Pancreas (tissue), 10 donors: ENCODE measurements at regions of chr13 and their contacts with region 1.

Region 1: DNA sequence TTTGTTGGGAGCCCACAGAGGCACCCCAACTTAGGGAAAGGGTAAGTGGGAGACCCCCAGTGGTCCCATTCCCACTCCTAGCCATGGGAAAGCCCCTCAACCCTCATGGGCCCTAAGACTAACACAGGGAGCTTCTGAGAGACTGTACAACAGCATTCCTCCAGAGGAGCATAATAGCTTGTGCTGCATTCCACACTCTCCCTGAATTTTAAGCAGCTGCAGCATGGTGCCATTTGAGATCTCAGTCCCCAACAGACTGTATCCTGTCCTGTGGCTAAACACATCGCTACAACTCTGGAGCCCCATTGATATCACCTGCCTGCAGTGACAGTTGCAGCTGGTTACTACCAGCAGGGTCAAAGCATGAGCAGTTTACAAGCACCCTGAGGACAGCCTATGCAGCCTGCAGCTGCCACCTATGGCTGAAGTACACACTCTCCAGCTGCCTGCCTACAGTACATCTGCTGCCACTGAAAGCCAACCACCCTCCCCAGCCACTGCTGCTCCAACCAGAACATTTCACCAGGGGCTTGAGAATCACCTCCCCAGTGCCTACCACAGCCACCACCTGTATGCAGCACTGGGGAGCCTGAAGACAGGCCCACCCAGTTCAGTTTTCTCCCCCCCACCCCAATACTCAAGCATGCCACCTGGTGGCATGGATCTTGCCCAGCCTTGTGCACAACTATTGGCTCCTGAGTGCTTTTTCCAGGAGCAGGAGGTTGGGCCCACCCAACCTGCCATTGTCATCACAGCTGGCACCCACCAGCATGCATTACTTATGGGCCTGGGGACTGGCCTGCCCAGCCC is 557.3 kb downstream of the GPC5 start:
- DNase-seq: peak in 2 of 6 donors; percentile 11 to 21
- ATAC-seq: no peak
- H3K4me3 ChIP-seq: no peak overlapping the region
- H3K27ac ChIP-seq: no peak overlapping the region
- H3K4me1 ChIP-seq: no peaks in the 10 kb centered on the region
- H3K27me3 ChIP-seq: no peaks in the 10 kb centered on the region
- CTCF ChIP-seq: no peak

Region 2: DNA sequence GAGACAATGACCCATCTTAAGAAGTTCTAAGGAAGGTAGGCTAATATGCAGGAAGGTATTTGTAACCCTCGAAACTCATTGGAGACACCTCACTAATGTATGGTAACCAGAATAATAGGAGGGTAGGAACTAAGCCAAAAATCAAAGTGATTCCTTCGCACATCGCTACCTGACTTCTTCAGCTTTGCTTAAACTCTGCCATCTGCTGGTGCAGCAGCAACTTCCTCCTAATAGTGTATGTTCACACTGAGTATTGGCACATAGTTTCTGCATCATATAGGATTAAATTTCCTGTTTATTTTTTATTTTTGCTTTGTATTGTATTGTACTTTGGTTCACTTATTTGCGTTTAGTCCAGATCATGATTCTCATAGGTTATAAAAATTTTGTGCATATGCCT is 118.9 kb after region 1 on chr13:
- intact Hi-C with region 1: loop called in 1 of 3 experiments (anchors 10 kb)
- DNase-seq: no peak
- ATAC-seq: peak; percentile 45 to 73 (median 50)
- H3K4me3 ChIP-seq: no peak overlapping the region
- H3K27ac ChIP-seq: no peak overlapping the region
- H3K4me1 ChIP-seq: no peaks in the 10 kb centered on the region
- H3K27me3 ChIP-seq: no peaks in the 10 kb centered on the region
- CTCF ChIP-seq: peak in 1 of 4 donors; percentile 6